Heart right ventricle (tissue), 16 donors: ENCODE measurements at regions of chr16 and their contacts with region 1.

Region 1: GRCh38 chr16:56102183-56102686 is 89.1 kb upstream of the GNAO1 start:
- DNase-seq: peak; percentile 65 to 66
- ATAC-seq: peak; percentile 80 to 93 (median 90)
- H3K4me3 ChIP-seq: peak overlapping the region in 8 of 10 donors; percentile 23 to 51 (median 40)
- H3K27ac ChIP-seq: peak overlapping the region in 9 of 10 donors; percentile 59 to 81 (median 75)
- H3K4me1 ChIP-seq: peaks cover 3 to 17% (median 5%) of the 10 kb centered on the region in 9 donors
- H3K27me3 ChIP-seq: no peaks in the 10 kb centered on the region
- CTCF ChIP-seq: no peak

Region 2: DNA sequence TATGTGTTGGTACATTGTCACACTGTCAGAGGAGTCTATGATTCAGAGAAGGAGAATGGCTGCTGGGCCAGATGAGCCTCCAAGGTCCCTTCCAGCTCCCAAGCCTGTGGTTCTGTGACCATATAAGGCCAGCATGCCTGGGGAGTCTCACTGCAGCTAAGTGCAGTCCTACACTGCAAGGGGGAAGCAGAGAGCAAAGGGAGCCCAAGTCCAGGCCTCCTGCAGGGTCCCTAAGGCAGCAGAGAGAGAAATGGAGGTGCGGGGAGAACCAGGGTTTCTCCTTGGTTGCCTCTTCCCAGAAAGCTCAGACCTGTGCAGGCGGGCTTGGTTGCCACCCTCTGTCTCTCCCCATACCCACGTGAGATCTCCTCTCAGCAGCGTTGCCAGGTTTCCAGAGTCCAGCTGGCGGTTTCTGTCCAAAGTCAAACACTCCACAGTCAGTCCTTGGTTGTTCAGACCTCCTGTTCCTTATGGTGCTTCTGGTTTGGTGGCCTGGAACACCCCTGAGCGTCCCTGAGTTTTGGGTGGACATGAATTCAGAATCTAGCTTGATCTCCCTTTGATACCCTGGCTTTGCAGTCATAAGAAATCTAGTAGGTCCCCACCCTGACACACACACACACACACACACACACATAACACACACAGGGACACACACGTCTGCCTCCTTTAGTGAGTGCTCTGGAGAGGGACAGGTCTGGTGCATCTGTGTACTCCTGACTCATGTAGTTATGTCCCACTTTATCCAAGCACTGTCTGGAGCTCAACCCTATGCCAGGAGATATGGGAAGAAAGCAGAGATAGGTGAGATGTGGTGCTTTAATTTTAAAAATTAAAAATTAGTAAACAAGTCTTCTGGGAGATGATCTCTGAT is 167.8 kb after region 1 on chr16:
- intact Hi-C with region 1: loop called in 1 of 10 experiments (anchors 10 kb)
- DNase-seq: peak; percentile 30 to 38
- ATAC-seq: peak; percentile 85 to 92 (median 86)
- H3K4me3 ChIP-seq: no peak overlapping the region
- H3K27ac ChIP-seq: peak overlapping the region in 9 of 10 donors; percentile 12 to 74 (median 69)
- H3K4me1 ChIP-seq: peaks cover 3 to 26% (median 13%) of the 10 kb centered on the region in 9 donors
- H3K27me3 ChIP-seq: no peaks in the 10 kb centered on the region
- CTCF ChIP-seq: peak in 7 of 9 donors; percentile 15 to 48 (median 30)